Activated CD8-positive, alpha-beta memory T cell treated with anti-CD3 and anti-CD28 coated beads, Interleukin-2, amount 10 ng/mL, durations not matched to agents 7 days and 5 days (primary cell): ENCODE measurements at regions of chr20 and their contacts with region 1.

Region 1: DNA sequence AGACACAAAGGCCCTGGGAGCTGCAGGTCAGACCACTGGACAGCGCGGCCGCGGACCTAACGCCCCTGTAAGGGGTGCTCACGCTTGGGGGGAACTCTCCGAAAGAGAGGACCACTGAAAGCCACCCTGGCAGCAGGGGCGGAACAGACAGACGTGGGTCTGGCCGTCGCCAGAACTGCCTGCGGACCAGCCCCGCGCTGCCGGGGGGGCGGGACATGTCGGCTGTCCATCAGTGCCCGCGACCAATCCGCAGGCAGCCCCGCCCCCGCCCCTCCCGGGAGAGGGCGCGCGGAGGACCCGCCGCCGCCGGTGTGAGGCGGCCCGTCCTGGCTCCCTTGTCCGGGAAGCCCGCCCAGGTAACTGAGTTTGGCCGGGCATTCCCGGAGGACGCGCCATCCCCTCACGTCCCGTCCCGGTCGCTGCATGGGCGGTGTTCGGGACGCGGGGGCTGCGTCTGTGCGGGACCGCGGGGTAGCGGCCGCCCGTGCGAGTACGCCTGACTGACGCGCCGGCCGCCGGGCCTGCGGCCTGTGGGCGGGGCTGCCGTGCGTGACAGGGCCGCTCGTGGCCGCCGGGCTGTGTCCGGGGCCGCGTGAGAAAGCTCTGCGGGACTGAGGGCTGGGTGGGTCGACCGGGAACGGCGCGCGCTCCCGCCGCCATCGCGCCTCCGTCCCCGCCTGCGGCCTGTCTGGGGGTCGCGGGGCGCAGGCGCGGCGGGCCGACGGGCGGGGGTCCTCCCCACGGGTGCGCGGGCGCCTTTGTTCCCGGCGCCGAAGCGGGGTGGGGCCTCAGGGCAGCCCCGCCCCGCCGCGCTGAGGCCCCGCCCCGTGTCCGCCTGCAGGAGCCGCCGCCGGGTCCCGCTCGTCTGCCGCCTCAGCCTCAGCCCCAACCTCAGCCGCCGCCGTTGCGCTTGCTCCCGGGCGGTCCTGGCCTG is at the start of gene PLCG1:
- DNase-seq: peak; percentile 90
- ATAC-seq: peak; percentile 68
- H3K4me3 Mint-ChIP-seq: peak within 1 kb of the TSS; percentile 91
- H3K27ac Mint-ChIP-seq: peak within 1 kb of the TSS; percentile 90
- H3K4me1 Mint-ChIP-seq: peaks cover 51% of the 10 kb centered on the region
- H3K27me3 Mint-ChIP-seq: no peaks in the 10 kb centered on the region
- total RNA-seq, gene PLCG1: 201 to 337 TPM

Region 2: GRCh38 chr20:40962730-40963504 is 174.0 kb before region 1 on chr20:
- CTCF ChIA-PET with region 1: interaction called, 13 read pairs
- DNase-seq: peak; percentile 83
- ATAC-seq: peak; percentile 90
- H3K4me3 Mint-ChIP-seq: no peak overlapping the region
- H3K27ac Mint-ChIP-seq: no peak overlapping the region
- H3K4me1 Mint-ChIP-seq: peaks cover 15% of the 10 kb centered on the region
- H3K27me3 Mint-ChIP-seq: peaks cover 5% of the 10 kb centered on the region

Region 3: GRCh38 chr20:41017390-41018042 is 119.4 kb before region 1 on chr20:
- CTCF ChIA-PET with region 1: no interaction called
- DNase-seq: no peak
- ATAC-seq: no peak
- H3K4me3 Mint-ChIP-seq: no peak overlapping the region
- H3K27ac Mint-ChIP-seq: no peak overlapping the region
- H3K4me1 Mint-ChIP-seq: peaks cover 6% of the 10 kb centered on the region
- H3K27me3 Mint-ChIP-seq: no peaks in the 10 kb centered on the region

Region 4: DNA sequence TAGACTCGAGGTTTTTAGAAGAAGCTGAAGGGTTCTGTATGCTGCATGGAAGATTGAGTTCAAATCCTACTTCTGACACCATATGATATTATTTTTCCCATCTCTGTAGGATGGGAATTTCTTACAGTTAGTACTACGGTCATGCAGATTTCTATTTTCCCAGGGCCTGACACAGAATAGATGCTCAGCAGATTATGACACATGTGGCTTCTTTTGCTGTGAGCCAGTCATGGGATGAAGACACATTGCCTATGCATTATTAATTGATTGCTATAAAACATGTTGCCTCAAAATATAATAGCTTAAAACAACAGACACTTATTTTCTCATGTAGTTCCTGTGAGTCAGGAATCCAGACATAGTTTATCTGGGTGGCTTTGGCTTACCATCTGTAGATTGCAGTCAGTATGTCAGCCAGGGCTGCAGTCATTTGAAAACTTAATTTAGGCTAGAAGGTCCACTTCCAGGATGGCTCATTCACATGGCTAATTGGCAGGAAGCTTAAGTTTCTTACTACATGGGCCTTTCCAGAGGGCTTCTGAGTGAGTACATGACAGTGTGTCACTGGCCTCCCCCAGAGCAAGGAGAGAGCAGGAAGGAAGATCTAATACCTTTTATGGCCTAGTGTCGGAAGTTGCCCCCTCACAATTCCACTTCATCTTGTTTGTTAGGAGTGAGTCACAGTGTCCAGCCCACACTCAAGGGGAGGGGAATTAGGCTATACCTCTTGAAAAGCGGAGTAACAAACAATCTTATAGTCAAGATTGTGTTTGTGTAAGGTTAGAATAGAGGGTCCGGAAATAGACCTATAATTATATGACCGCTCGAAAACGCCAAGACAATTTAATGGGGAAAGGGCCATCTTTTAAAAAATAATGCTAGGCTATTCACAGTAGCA is 78.7 kb before region 1 on chr20:
- CTCF ChIA-PET with region 1: no interaction called
- DNase-seq: no peak
- ATAC-seq: no peak
- H3K4me3 Mint-ChIP-seq: no peak overlapping the region
- H3K27ac Mint-ChIP-seq: no peak overlapping the region
- H3K4me1 Mint-ChIP-seq: peaks cover 40% of the 10 kb centered on the region
- H3K27me3 Mint-ChIP-seq: no peaks in the 10 kb centered on the region

Region 5: GRCh38 chr20:41119546-41120235 is 17.3 kb before region 1 on chr20:
- CTCF ChIA-PET with region 1: interaction called, 36 read pairs
- DNase-seq: no peak
- ATAC-seq: no peak
- H3K4me3 Mint-ChIP-seq: no peak overlapping the region
- H3K27ac Mint-ChIP-seq: no peak overlapping the region
- H3K4me1 Mint-ChIP-seq: peaks cover 14% of the 10 kb centered on the region
- H3K27me3 Mint-ChIP-seq: no peaks in the 10 kb centered on the region

Region 6: GRCh38 chr20:41149679-41150131 is 12.8 kb after region 1 on chr20:
- CTCF ChIA-PET with region 1: interaction called, 152 read pairs
- DNase-seq: no peak
- ATAC-seq: no peak
- H3K4me3 Mint-ChIP-seq: no peak overlapping the region
- H3K27ac Mint-ChIP-seq: peak overlapping the region; percentile 35
- H3K4me1 Mint-ChIP-seq: peaks cover 96% of the 10 kb centered on the region
- H3K27me3 Mint-ChIP-seq: no peaks in the 10 kb centered on the region

Region 7: DNA sequence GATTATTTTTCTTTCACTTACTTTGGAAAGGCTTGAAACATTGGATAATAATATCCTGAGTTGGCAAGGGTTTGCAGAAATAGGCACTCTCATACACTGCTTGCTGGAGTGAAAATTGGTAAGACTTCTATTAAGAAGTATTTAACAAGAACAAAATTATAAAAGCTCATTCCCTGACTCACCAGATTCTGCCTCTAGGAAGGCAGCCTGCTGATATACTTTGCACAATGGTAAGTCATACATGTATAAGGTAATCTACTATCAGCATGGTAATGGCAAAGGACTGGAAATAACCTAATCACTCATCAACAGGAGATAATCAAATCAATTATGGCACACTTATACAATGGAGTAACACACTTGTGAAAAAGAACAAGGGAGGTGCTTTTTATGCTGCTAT is 86.2 kb after region 1 on chr20:
- CTCF ChIA-PET with region 1: interaction called, 10 read pairs
- DNase-seq: no peak
- ATAC-seq: no peak
- H3K4me3 Mint-ChIP-seq: no peak overlapping the region
- H3K27ac Mint-ChIP-seq: no peak overlapping the region
- H3K4me1 Mint-ChIP-seq: no peaks in the 10 kb centered on the region
- H3K27me3 Mint-ChIP-seq: no peaks in the 10 kb centered on the region

Region 8: DNA sequence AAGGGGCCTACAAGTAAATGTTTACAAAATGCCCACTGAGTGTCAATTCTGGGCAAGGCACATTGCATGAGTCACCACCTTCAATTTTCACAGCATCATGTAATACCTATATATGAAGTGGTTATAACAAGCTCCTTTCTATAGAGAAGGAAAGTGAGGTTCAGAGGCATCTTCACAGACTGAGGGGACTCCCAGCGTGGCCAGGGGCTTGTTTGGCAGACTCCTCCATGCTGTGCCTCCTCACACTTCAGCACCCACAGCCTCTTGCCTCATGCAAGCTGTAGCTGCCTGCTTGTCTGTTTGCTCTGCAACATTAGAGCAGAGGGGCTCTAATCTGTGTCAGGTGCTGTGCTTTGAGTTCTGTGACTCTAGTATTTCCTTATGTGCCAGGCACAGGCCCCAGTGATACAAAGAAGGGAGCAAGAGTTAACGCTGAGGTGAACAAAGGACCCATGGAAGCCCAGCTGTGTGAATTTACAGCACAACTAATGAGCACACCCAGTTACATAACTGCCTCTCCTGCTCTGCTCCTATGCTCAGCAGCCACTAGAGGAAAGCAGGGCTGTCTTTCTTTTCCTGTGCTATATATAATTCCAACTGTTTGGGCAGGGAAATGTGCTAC is 108.2 kb after region 1 on chr20:
- CTCF ChIA-PET with region 1: interaction called, 26 read pairs
- DNase-seq: no peak
- ATAC-seq: no peak
- H3K4me3 Mint-ChIP-seq: no peak overlapping the region
- H3K27ac Mint-ChIP-seq: no peak overlapping the region
- H3K4me1 Mint-ChIP-seq: peaks cover 45% of the 10 kb centered on the region
- H3K27me3 Mint-ChIP-seq: no peaks in the 10 kb centered on the region

Region 9: GRCh38 chr20:41339507-41340326 is 202.8 kb after region 1 on chr20:
- CTCF ChIA-PET with region 1: interaction called, 94 read pairs
- DNase-seq: peak; percentile 86
- ATAC-seq: peak; percentile 93
- H3K4me3 Mint-ChIP-seq: peak overlapping the region; percentile 70
- H3K27ac Mint-ChIP-seq: peak overlapping the region; percentile 54
- H3K4me1 Mint-ChIP-seq: peaks cover 11% of the 10 kb centered on the region
- H3K27me3 Mint-ChIP-seq: peaks cover 11% of the 10 kb centered on the region